Naive thymus-derived CD4-positive, alpha-beta T cell (primary cell): ENCODE measurements at regions of chr21 and their contacts with region 1.

Region 1: GRCh38 chr21:32826329-32827167 is 55.0 kb upstream of the PAXBP1 start:
- DNase-seq: peak in 8 of 9 donors; percentile 10 to 55 (median 34)
- ATAC-seq: peak; percentile 80
- H3K4me3 ChIP-seq: no peak overlapping the region
- H3K4me3 Mint-ChIP-seq: no peak overlapping the region
- H3K27ac ChIP-seq: no peak overlapping the region
- H3K27ac Mint-ChIP-seq: no peak overlapping the region
- H3K4me1 ChIP-seq: no peaks in the 10 kb centered on the region
- H3K4me1 Mint-ChIP-seq: peaks cover 0 to 7% (median 0%) of the 10 kb centered on the region in 7 donors
- H3K27me3 ChIP-seq: no peaks in the 10 kb centered on the region
- H3K27me3 Mint-ChIP-seq: peaks cover 0 to 19% (median 4%) of the 10 kb centered on the region in 5 donors

Region 2: GRCh38 chr21:31781737-31782136 is 1044.8 kb before region 1 on chr21:
- CTCF ChIA-PET with region 1: no interaction called
- POLR2A ChIA-PET with region 1: no interaction called
- intact Hi-C with region 1: loop called in 1 of 2 experiments (anchors 10 kb)
- DNase-seq: no peak
- ATAC-seq: no peak
- H3K4me3 ChIP-seq: no peak overlapping the region
- H3K4me3 Mint-ChIP-seq: no peak overlapping the region
- H3K27ac ChIP-seq: no peak overlapping the region
- H3K27ac Mint-ChIP-seq: no peak overlapping the region
- H3K4me1 ChIP-seq: no peaks in the 10 kb centered on the region
- H3K4me1 Mint-ChIP-seq: peaks cover 3 to 11% (median 4%) of the 10 kb centered on the region in 7 donors
- H3K27me3 ChIP-seq: no peaks in the 10 kb centered on the region
- H3K27me3 Mint-ChIP-seq: peaks cover 0 to 17% (median 13%) of the 10 kb centered on the region in 5 donors

Region 3: DNA sequence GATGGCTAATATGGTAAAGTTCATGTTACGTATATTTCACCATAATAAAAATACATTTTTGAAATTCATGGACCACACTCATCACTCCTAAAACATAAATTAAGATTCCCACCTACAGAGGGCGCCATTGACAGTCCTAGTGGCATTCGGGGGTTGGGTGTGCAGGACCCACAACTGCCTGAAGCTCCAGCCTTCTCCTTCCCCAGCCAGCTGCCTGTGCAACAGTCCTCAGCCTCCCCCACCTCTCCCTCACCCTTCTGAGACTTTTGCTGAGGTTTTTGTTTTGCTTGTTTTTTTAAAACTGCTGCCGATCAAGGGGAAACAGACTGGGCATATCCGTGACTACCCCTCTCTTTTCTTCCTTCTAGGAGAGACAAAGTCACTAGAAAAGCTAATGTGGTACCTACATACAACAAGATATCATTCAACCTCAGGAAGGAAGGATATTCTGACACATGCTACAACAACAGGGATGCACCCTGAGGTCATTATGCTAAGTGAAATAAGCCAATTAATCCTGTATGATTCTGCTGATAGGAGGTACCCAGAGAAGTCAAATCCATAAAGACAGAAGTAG is 423.3 kb before region 1 on chr21:
- CTCF ChIA-PET with region 1: no interaction called
- POLR2A ChIA-PET with region 1: no interaction called
- intact Hi-C with region 1: loop called in 1 of 2 experiments (anchors 5 kb)
- DNase-seq: peak in 7 of 9 donors; percentile 43 to 54 (median 50)
- ATAC-seq: peak; percentile 87
- H3K4me3 ChIP-seq: no peak overlapping the region
- H3K4me3 Mint-ChIP-seq: no peak overlapping the region
- H3K27ac ChIP-seq: no peak overlapping the region
- H3K27ac Mint-ChIP-seq: no peak overlapping the region
- H3K4me1 ChIP-seq: peaks cover 0 to 4% of the 10 kb centered on the region in 2 donors
- H3K4me1 Mint-ChIP-seq: peaks cover 0 to 17% (median 0%) of the 10 kb centered on the region in 7 donors
- H3K27me3 ChIP-seq: no peaks in the 10 kb centered on the region
- H3K27me3 Mint-ChIP-seq: peaks cover 0 to 17% (median 12%) of the 10 kb centered on the region in 5 donors

Region 4: GRCh38 chr21:32412162-32413014 is 414.2 kb before region 1 on chr21 and contains the start of gene EVA1C:
- CTCF ChIA-PET with region 1: no interaction called
- POLR2A ChIA-PET with region 1: no interaction called
- intact Hi-C with region 1: loop called in 1 of 2 experiments (anchors 10 kb)
- DNase-seq: peak; percentile 56 to 73 (median 70)
- ATAC-seq: peak; percentile 81
- H3K4me3 ChIP-seq: peak within 1 kb of the TSS; percentile 76
- H3K4me3 Mint-ChIP-seq: peak within 1 kb of the TSS; percentile 88 to 97 (median 94)
- H3K27ac ChIP-seq: peak within 1 kb of the TSS; percentile 85
- H3K27ac Mint-ChIP-seq: peak within 1 kb of the TSS; percentile 89 to 95 (median 93)
- H3K4me1 ChIP-seq: peaks cover 14 to 29% of the 10 kb centered on the region in 2 donors
- H3K4me1 Mint-ChIP-seq: peaks cover 22 to 57% (median 28%) of the 10 kb centered on the region in 7 donors
- H3K27me3 ChIP-seq: no peaks in the 10 kb centered on the region
- H3K27me3 Mint-ChIP-seq: peaks cover 0 to 7% (median 0%) of the 10 kb centered on the region in 5 donors
- total RNA-seq, gene EVA1C: 2.6 to 16.3 (median 12.3) TPM

Region 5: GRCh38 chr21:32494934-32495703 is 331.4 kb before region 1 on chr21:
- CTCF ChIA-PET with region 1: no interaction called
- POLR2A ChIA-PET with region 1: no interaction called
- intact Hi-C with region 1: no loop called
- DNase-seq: no peak
- ATAC-seq: no peak
- H3K4me3 ChIP-seq: no peak overlapping the region
- H3K4me3 Mint-ChIP-seq: no peak overlapping the region
- H3K27ac ChIP-seq: no peak overlapping the region
- H3K27ac Mint-ChIP-seq: peak overlapping the region in 2 of 9 donors; percentile 4 to 17
- H3K4me1 ChIP-seq: peaks cover 0 to 16% of the 10 kb centered on the region in 2 donors
- H3K4me1 Mint-ChIP-seq: peaks cover 0 to 10% (median 5%) of the 10 kb centered on the region in 7 donors
- H3K27me3 ChIP-seq: no peaks in the 10 kb centered on the region
- H3K27me3 Mint-ChIP-seq: no peaks in the 10 kb centered on the region

Region 6: DNA sequence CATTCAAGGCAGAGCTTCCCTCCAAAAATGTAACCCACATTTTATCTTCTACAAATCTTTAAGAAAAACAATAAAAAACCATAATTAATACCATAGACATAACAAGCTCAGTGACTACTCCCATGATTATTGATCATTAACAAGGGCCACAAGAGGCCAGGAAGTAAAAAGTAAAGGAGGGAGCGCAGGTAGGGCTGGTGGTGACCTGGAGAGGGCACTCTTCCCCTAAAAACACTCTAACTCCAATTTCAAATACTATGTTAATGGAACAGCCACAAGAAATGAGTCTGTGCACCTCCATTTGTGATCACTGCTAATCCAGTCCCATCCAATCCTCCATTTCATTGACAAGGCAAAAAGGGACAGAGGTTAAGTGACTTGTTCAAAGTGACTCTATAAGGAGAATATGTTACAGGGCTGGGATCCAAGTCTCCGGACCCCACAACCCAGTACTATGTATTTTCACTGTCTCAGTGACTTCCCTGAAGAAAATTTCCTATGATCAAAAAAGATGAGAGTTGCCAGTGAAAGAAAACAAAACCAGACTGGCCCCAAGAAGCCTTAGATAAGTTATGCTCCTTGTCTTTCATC is 173.1 kb before region 1 on chr21:
- CTCF ChIA-PET with region 1: interaction called, 5 read pairs
- POLR2A ChIA-PET with region 1: no interaction called
- intact Hi-C with region 1: loop called in 1 of 2 experiments (anchors 1 kb)
- DNase-seq: peak in 7 of 9 donors; percentile 8 to 40 (median 28)
- ATAC-seq: peak; percentile 64
- H3K4me3 ChIP-seq: no peak overlapping the region
- H3K4me3 Mint-ChIP-seq: no peak overlapping the region
- H3K27ac ChIP-seq: no peak overlapping the region
- H3K27ac Mint-ChIP-seq: no peak overlapping the region
- H3K4me1 ChIP-seq: no peaks in the 10 kb centered on the region
- H3K4me1 Mint-ChIP-seq: peaks cover 0 to 12% (median 0%) of the 10 kb centered on the region in 7 donors
- H3K27me3 ChIP-seq: no peaks in the 10 kb centered on the region
- H3K27me3 Mint-ChIP-seq: no peaks in the 10 kb centered on the region

Region 7: GRCh38 chr21:32687643-32688345 is 138.8 kb before region 1 on chr21:
- CTCF ChIA-PET with region 1: interaction called, 6 read pairs
- POLR2A ChIA-PET with region 1: no interaction called
- intact Hi-C with region 1: loop called (anchors 1 to 10 kb)
- DNase-seq: peak in 1 of 9 donors; percentile 12
- ATAC-seq: no peak
- H3K4me3 ChIP-seq: no peak overlapping the region
- H3K4me3 Mint-ChIP-seq: no peak overlapping the region
- H3K27ac ChIP-seq: no peak overlapping the region
- H3K27ac Mint-ChIP-seq: peak overlapping the region in 1 of 9 donors; percentile 23
- H3K4me1 ChIP-seq: no peaks in the 10 kb centered on the region
- H3K4me1 Mint-ChIP-seq: peaks cover 0 to 4% (median 3%) of the 10 kb centered on the region in 7 donors
- H3K27me3 ChIP-seq: no peaks in the 10 kb centered on the region
- H3K27me3 Mint-ChIP-seq: no peaks in the 10 kb centered on the region

Region 8: DNA sequence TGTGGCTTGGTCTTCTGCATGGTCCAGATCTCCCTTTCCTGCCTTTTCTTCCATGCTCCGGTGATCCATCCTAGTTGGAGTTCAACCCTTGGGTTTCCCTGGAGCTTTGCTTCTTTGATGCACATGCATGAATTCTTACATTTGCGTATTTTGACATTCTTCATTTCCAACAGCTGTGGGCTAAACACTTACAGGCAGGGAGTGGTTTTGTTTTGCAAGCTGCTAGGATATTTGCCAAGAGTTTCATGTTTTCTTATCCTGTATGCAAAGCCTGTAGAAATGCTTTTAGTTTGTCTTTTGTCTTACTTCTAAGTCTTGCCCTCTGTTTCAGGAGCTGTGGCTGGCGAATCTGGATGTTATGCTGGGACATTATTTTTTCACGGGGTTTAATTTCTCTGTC is 35.3 kb after region 1 on chr21:
- CTCF ChIA-PET with region 1: no interaction called
- POLR2A ChIA-PET with region 1: no interaction called
- intact Hi-C with region 1: no loop called
- DNase-seq: no peak
- ATAC-seq: no peak
- H3K4me3 ChIP-seq: no peak overlapping the region
- H3K4me3 Mint-ChIP-seq: no peak overlapping the region
- H3K27ac ChIP-seq: no peak overlapping the region
- H3K27ac Mint-ChIP-seq: no peak overlapping the region
- H3K4me1 ChIP-seq: no peaks in the 10 kb centered on the region
- H3K4me1 Mint-ChIP-seq: no peaks in the 10 kb centered on the region
- H3K27me3 ChIP-seq: no peaks in the 10 kb centered on the region
- H3K27me3 Mint-ChIP-seq: peaks cover 0 to 20% (median 14%) of the 10 kb centered on the region in 5 donors

Region 9: DNA sequence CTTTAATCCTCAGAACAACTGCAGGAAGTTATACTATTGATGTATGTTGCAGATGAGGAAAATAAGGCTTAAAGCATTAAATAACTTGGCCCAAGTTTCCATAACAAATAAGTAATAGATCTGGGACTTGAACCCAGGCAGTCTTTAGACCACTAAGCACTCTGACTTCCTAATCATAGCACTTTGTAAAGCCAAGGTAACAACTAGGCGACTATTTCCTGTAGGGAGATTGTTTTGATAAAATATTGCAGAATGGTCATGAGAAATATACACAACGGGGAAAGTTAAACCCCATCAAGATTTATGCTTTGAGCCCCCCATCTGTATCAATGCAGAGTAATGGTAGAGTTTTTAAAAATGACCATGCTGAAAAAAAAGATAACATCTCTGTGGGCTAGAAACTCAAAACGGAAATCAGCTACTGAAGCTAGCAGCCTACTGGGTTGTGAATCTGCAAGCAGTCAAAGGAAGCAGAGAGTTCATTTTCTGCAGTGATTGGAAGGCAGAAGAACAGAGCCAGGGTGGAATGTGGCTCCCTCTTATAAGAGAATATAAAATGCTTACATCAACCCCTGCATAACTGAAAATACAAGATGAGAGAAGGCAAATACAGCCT is 88.0 kb after region 1 on chr21:
- CTCF ChIA-PET with region 1: no interaction called
- POLR2A ChIA-PET with region 1: no interaction called
- intact Hi-C with region 1: no loop called
- DNase-seq: peak in 6 of 9 donors; percentile 20 to 47 (median 43)
- ATAC-seq: peak; percentile 61
- H3K4me3 ChIP-seq: peak overlapping the region; percentile 5
- H3K4me3 Mint-ChIP-seq: peak overlapping the region; percentile 2 to 74 (median 52)
- H3K27ac ChIP-seq: peak overlapping the region; percentile 43
- H3K27ac Mint-ChIP-seq: peak overlapping the region in 8 of 9 donors; percentile 11 to 90 (median 74)
- H3K4me1 ChIP-seq: peaks cover 23 to 33% of the 10 kb centered on the region in 2 donors
- H3K4me1 Mint-ChIP-seq: peaks cover 18 to 49% (median 45%) of the 10 kb centered on the region in 7 donors
- H3K27me3 ChIP-seq: no peaks in the 10 kb centered on the region
- H3K27me3 Mint-ChIP-seq: peaks cover 0 to 17% (median 0%) of the 10 kb centered on the region in 5 donors

Region 10: DNA sequence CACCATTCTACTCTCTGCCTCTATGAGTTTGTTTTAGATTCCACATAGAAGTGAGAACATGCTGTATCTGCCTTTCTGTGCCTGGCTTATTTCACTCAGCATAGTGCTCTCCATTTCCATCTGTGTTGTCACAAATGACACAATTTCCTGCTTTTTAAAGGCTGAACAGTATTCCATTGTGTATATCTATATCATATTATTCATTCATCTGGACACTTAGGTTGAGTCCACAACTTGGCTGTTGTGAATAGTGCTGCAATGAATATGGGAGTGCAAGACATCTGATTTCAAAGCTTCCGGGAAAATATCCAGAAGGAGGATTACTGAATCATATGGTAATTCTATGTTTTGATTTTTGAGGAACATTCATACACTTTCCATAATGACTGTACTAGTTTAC is 782.0 kb after region 1 on chr21:
- CTCF ChIA-PET with region 1: no interaction called
- POLR2A ChIA-PET with region 1: no interaction called
- intact Hi-C with region 1: loop called in 1 of 2 experiments (anchors 10 kb)
- DNase-seq: no peak
- ATAC-seq: no peak
- H3K4me3 ChIP-seq: no peak overlapping the region
- H3K4me3 Mint-ChIP-seq: no peak overlapping the region
- H3K27ac ChIP-seq: no peak overlapping the region
- H3K27ac Mint-ChIP-seq: peak overlapping the region in 1 of 9 donors; percentile 7
- H3K4me1 ChIP-seq: no peaks in the 10 kb centered on the region
- H3K4me1 Mint-ChIP-seq: peaks cover 0 to 5% (median 4%) of the 10 kb centered on the region in 7 donors
- H3K27me3 ChIP-seq: no peaks in the 10 kb centered on the region
- H3K27me3 Mint-ChIP-seq: no peaks in the 10 kb centered on the region